ENCODE measurements at regions of chr10 and their contacts with region 1.

Region 1: GRCh38 chr10:90745563-90745962 is 112.3 kb downstream of the HTR7 start:
- DNase-seq: no peak
- ATAC-seq: no peak
- H3K4me3 ChIP-seq: no peak overlapping the region
- H3K27ac ChIP-seq: no peak overlapping the region
- H3K4me1 ChIP-seq: no peaks in the 10 kb centered on the region
- CTCF ChIP-seq: no peak
- EP300 ChIP-seq: no peak
- POLR2A ChIP-seq: no peak
- RAD21 ChIP-seq: no peak

Region 2: DNA sequence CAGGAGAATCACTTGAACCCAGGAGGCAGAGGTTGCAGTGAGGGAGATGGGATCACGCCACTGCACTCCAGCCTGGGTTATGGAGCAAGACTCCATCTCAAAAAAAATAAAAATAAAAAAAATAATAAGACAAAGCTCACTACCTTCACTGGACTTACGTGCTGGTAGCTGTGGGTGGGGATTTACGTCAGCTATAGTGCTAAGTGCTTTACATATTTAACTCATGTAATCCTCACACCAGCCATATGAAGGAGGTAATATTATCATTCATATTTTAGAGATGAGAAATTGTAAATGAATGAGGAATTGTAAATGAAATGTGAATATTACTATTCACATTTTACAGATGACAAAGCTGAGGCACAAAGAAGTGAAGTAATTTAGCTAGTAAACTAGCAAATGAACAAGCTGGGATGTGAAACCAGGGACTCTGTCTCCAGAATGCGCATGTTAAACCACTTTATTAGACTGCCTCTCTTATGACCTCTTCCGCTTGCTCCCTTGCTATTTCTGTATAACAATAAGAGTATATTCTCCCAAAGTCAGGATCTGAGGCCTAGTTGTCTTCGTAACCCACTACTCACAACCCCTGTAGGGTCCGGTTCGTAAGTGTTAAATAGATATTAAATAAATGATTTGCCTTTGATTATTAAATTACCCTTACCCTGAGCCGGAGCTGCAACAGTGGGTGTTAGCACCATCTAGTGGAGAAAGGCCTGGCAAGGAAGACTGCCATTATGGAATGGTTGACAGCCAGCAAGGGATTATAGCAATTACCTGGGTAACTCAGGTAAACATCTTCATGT is 42.0 kb after region 1 on chr10:
- CTCF ChIA-PET with region 1: interaction called, 14 read pairs
- POLR2A ChIA-PET with region 1: no interaction called
- DNase-seq: peak; percentile 22 to 42
- ATAC-seq: peak; percentile 74 to 92; a peak in 5 of 6 replicates
- H3K4me3 ChIP-seq: no peak overlapping the region
- H3K27ac ChIP-seq: no peak overlapping the region
- H3K4me1 ChIP-seq: no peaks in the 10 kb centered on the region
- CTCF ChIP-seq: peak; percentile 71
- EP300 ChIP-seq: no peak
- POLR2A ChIP-seq: no peak
- RAD21 ChIP-seq: peak; percentile 65 to 72

Region 3: GRCh38 chr10:90862908-90863514 is 117.4 kb after region 1 on chr10:
- CTCF ChIA-PET with region 1: interaction called, 52 read pairs
- POLR2A ChIA-PET with region 1: no interaction called
- DNase-seq: peak; percentile 28 to 37
- ATAC-seq: peak in 1 of 2 experiments; percentile 51; a peak in 3 of 6 replicates
- H3K4me3 ChIP-seq: no peak overlapping the region
- H3K27ac ChIP-seq: no peak overlapping the region
- H3K4me1 ChIP-seq: peaks cover 9% of the 10 kb centered on the region; the same call in 2 of the 3 replicates
- CTCF ChIP-seq: peak; percentile 90
- EP300 ChIP-seq: no peak
- POLR2A ChIP-seq: no peak
- RAD21 ChIP-seq: peak; percentile 79 to 88

Measured in A549 (cell line).